ENCODE measurements at regions of chr6 and their contacts with region 1.

Region 1: DNA sequence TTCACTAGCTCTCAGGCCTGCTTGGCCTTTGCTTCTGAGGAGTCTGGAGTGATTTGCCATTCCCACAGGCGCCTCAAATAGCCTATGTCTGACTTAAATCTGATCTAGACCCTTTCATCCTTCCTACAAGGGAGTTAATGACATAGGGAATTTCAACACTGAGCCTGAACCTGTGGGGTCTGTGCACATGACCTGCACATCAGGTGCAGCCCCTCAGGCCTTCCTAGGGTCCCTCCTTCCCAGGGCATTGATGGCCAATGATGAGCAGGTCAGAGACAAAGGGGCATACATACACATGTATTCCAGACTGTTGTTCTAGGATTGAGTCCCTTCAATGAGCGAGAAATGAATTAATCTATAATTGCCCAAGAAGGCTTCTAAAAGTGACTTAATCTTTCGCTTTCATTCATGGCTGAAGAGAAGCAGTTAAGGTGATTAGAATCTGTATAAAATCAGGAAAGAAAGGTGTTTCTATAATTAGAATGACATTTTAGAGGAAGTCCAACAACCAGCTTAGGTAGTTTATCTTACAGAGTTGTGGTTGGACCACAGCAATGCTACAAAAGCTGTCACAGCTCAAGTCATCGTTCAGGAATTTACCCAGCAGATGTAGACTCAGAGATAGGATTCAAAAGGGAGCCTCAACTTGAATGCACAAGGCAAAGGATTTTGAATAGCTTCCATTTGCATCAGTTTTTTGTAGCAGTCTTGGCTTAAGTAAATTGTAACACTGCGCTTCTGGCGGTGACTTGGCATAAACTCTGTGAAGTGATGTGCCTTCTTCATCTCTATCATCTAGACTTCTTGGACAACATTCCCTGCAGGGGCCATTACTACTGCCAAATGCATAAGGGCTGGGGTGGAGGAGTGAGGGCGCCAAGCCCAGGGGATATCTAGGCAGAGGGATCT is 27.0 kb upstream of the TBC1D7 start:
- DNase-seq: peak; percentile 73
- ATAC-seq: peak; percentile 34
- H3K4me3 ChIP-seq: peak overlapping the region; percentile 30 to 69 (median 37)
- H3K4me3 Mint-ChIP-seq: peak overlapping the region; percentile 80
- H3K27ac ChIP-seq: peak overlapping the region; percentile 91 to 99
- H3K27ac Mint-ChIP-seq: peak overlapping the region; percentile 92
- H3K4me1 ChIP-seq: peaks cover 59 to 74% of the 10 kb centered on the region in 2 donors
- H3K4me1 Mint-ChIP-seq: peaks cover 72% of the 10 kb centered on the region
- H3K27me3 ChIP-seq: no peaks in the 10 kb centered on the region
- H3K27me3 Mint-ChIP-seq: no peaks in the 10 kb centered on the region
- CTCF ChIP-seq: no peak

Region 2: GRCh38 chr6:13336553-13336952 is 18.7 kb before region 1 on chr6:
- CTCF ChIA-PET with region 1: interaction called, 26 read pairs
- POLR2A ChIA-PET with region 1: interaction called, 5 read pairs
- intact Hi-C with region 1: loop called (anchors 2 kb)
- DNase-seq: peak; percentile 84
- ATAC-seq: peak; percentile 81
- H3K4me3 ChIP-seq: no peak overlapping the region
- H3K4me3 Mint-ChIP-seq: no peak overlapping the region
- H3K27ac ChIP-seq: no peak overlapping the region
- H3K27ac Mint-ChIP-seq: peak overlapping the region; percentile 5
- H3K4me1 ChIP-seq: peaks cover 40% of the 10 kb centered on the region in 2 donors
- H3K4me1 Mint-ChIP-seq: peaks cover 46% of the 10 kb centered on the region
- H3K27me3 ChIP-seq: no peaks in the 10 kb centered on the region
- H3K27me3 Mint-ChIP-seq: no peaks in the 10 kb centered on the region
- CTCF ChIP-seq: peak; percentile 90

Region 3: DNA sequence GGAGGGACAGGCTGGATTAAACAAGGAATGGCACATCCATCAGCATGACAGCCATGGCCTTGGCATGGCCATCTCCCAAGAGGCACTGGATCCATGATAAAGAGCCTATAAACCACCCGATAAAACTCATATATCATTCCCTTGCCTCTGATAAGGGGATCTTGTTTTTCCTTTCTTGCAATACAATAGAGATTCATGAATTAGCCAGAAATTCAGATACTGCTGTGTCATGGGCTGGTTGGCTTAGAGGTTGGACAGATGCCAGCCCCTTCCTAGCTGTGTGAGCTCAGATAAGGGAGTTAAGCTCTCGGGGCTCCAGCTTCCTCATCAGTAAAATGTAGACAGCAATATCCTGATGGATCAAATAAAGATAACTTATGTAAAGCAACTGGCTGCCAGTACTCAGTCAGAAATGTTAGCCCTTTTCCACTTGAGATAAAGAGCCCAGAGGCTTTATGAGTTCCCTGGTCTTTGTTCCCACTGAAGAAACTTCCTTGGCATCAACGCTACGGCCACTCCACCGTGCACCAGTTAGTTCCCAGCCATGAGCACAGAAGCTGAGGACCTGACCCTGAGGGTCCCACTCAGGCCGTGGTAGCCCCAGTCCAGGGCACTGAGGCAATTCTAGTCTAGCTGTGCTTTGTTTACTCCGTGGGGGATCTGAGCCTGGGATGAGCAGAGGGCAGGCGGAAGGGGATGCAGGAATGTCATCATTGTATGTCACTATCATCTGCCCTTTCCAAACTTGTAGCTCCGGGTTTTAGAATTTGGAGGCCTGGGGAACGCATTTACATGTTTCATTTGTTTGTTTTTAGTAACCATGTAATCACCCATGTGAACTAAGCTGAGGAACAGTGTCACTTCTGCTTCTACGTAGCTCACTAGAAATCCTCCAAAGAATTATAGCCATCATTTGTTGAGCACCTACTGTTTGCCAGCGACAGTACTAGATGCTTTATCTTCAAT is 40.3 kb after region 1 on chr6:
- CTCF ChIA-PET with region 1: interaction called, 5 read pairs
- POLR2A ChIA-PET with region 1: interaction called, 11 read pairs
- intact Hi-C with region 1: loop called (anchors 2 kb)
- DNase-seq: peak; percentile 73
- ATAC-seq: peak; percentile 59
- H3K4me3 ChIP-seq: peak overlapping the region in 1 of 5 experiments; percentile 2
- H3K4me3 Mint-ChIP-seq: peak overlapping the region; percentile 47
- H3K27ac ChIP-seq: peak overlapping the region; percentile 79 to 83
- H3K27ac Mint-ChIP-seq: peak overlapping the region; percentile 91
- H3K4me1 ChIP-seq: peaks cover 36 to 52% of the 10 kb centered on the region in 2 donors
- H3K4me1 Mint-ChIP-seq: peaks cover 52% of the 10 kb centered on the region
- H3K27me3 ChIP-seq: no peaks in the 10 kb centered on the region
- H3K27me3 Mint-ChIP-seq: no peaks in the 10 kb centered on the region
- CTCF ChIP-seq: no peak

Region 4: GRCh38 chr6:13454286-13455221 is 99.3 kb after region 1 on chr6:
- CTCF ChIA-PET with region 1: interaction called, 4 read pairs
- POLR2A ChIA-PET with region 1: interaction called, 4 read pairs
- intact Hi-C with region 1: loop called (anchors 1 kb)
- DNase-seq: peak; percentile 75
- ATAC-seq: peak; percentile 77
- H3K4me3 ChIP-seq: peak overlapping the region in 3 of 5 experiments; percentile 7 to 26 (median 12)
- H3K4me3 Mint-ChIP-seq: peak overlapping the region; percentile 76
- H3K27ac ChIP-seq: peak overlapping the region; percentile 23 to 50
- H3K27ac Mint-ChIP-seq: peak overlapping the region; percentile 88
- H3K4me1 ChIP-seq: peaks cover 36 to 41% of the 10 kb centered on the region in 2 donors
- H3K4me1 Mint-ChIP-seq: peaks cover 56% of the 10 kb centered on the region
- H3K27me3 ChIP-seq: no peaks in the 10 kb centered on the region
- H3K27me3 Mint-ChIP-seq: no peaks in the 10 kb centered on the region
- CTCF ChIP-seq: peak; percentile 17

Region 5: DNA sequence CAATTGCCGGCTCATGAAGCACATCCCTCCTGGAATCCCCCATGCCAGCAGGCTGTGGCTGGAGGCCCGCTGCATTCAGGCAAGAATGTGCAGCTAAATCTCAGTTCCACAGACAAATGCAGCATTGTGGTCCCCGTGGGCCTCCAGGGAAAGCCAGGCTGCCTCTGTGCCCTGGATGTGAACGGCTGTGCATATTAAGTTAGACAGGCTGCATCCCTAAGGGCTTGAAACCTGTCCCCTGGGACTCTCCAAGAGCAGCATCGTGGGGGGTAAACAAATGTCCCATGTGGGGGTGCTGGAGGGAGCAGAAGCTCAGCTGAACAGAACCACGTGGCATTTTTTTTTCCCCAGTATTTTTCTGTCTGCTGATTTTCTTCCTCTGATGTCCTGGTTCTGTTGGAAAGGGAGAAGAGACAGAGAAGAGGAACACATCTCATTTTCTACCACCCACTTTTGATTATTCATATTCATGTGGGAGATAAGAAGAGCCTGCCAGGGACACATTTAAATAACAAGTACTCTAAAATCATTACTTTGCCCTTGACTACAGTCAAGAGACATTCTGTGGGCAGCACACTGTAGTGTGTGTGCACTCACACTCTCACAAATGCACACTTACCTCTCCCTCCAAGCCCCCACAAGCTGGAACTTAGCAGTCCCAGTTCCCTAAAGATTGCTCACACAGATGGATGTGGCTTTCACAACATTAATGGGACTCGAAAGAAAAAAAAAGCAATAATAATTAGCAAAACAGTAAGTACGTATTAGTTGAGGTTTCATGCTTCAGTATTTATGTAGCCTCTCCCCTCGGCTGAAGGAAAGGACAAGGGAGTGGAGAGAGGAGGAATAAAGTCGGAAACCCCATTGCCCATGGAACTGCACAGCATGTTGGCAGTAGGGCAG is 115.2 kb after region 1 on chr6:
- CTCF ChIA-PET with region 1: no interaction called
- POLR2A ChIA-PET with region 1: no interaction called
- intact Hi-C with region 1: no loop called
- DNase-seq: no peak
- ATAC-seq: peak; percentile 57
- H3K4me3 ChIP-seq: no peak overlapping the region
- H3K4me3 Mint-ChIP-seq: no peak overlapping the region
- H3K27ac ChIP-seq: no peak overlapping the region
- H3K27ac Mint-ChIP-seq: no peak overlapping the region
- H3K4me1 ChIP-seq: peaks cover 24 to 48% of the 10 kb centered on the region in 2 donors
- H3K4me1 Mint-ChIP-seq: peaks cover 66% of the 10 kb centered on the region
- H3K27me3 ChIP-seq: no peaks in the 10 kb centered on the region
- H3K27me3 Mint-ChIP-seq: no peaks in the 10 kb centered on the region
- CTCF ChIP-seq: no peak

Region 6: DNA sequence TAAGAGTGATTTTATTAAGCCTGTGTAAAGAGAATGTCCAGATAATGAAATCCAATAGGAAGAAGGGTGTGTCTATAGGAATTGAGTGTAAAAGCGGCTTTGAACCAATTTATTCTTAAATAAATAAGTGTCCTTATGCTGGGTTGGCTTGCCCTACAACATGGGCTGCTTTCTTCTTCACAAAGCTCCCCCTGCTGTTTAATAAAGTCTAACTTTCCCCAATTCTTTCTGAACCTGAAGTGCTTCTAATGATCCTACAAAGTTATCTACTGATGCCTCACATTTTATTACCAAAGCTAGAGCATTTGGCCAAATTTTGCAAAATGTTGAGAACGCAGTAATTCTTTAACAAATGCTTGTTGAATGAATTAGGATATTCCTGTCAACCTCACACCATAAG is 182.8 kb after region 1 on chr6:
- CTCF ChIA-PET with region 1: interaction called, 13 read pairs
- POLR2A ChIA-PET with region 1: no interaction called
- intact Hi-C with region 1: no loop called
- DNase-seq: peak; percentile 64
- ATAC-seq: peak; percentile 56
- H3K4me3 ChIP-seq: no peak overlapping the region
- H3K4me3 Mint-ChIP-seq: no peak overlapping the region
- H3K27ac ChIP-seq: no peak overlapping the region
- H3K27ac Mint-ChIP-seq: no peak overlapping the region
- H3K4me1 ChIP-seq: peaks cover 6 to 8% of the 10 kb centered on the region in 2 donors
- H3K4me1 Mint-ChIP-seq: peaks cover 17% of the 10 kb centered on the region
- H3K27me3 ChIP-seq: no peaks in the 10 kb centered on the region
- H3K27me3 Mint-ChIP-seq: no peaks in the 10 kb centered on the region
- CTCF ChIP-seq: peak; percentile 54